ENCODE measurements at regions of chr14 and their contacts with region 1.

Region 1: GRCh38 chr14:52325126-52325525 is 11.0 kb downstream of the PTGER2 start:
- DNase-seq: peak; percentile 52
- H3K4me3 Mint-ChIP-seq: peak overlapping the region; percentile 77
- H3K27ac Mint-ChIP-seq: peak overlapping the region; percentile 62
- H3K4me1 Mint-ChIP-seq: peaks cover 90% of the 10 kb centered on the region
- H3K27me3 Mint-ChIP-seq: no peaks in the 10 kb centered on the region

Region 2: DNA sequence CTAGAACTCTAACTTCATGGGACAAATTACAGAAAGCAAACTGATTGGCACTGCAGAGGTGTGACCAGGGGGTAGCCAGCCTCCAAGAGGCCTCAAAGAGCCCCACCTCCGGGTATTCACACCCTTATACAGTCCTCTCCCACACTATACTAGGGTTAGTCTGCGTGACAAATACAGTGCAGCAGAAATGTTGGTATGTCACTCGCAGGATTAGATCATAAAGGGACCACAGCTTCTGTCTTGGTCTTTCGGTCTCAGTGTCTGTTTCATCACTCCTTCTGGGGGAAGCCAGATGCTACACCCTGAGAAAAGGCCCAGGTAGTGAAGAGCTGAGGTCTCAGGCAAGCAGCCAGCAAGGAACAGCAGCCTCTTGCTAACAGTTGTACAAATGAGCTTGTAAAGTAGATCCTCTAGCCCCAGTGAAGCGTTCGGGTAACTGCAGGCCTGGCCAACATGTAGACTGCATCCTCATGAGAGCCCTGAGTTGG is 1588.2 kb before region 1 on chr14:
- intact Hi-C with region 1: loop called (anchors 5 kb)
- DNase-seq: peak; percentile 18
- H3K4me3 Mint-ChIP-seq: no peak overlapping the region
- H3K27ac Mint-ChIP-seq: peak overlapping the region; percentile 87
- H3K4me1 Mint-ChIP-seq: peaks cover 45% of the 10 kb centered on the region
- H3K27me3 Mint-ChIP-seq: no peaks in the 10 kb centered on the region

Region 3: GRCh38 chr14:52338051-52338681 is 13.0 kb after region 1 on chr14:
- intact Hi-C with region 1: loop called (anchors 1 kb)
- DNase-seq: no peak
- H3K4me3 Mint-ChIP-seq: no peak overlapping the region
- H3K27ac Mint-ChIP-seq: no peak overlapping the region
- H3K4me1 Mint-ChIP-seq: peaks cover 36% of the 10 kb centered on the region
- H3K27me3 Mint-ChIP-seq: peaks cover 2% of the 10 kb centered on the region

Region 4: GRCh38 chr14:52402812-52403526 is 77.8 kb after region 1 on chr14:
- intact Hi-C with region 1: loop called (anchors 1 kb)
- DNase-seq: no peak
- H3K4me3 Mint-ChIP-seq: no peak overlapping the region
- H3K27ac Mint-ChIP-seq: peak overlapping the region; percentile 54
- H3K4me1 Mint-ChIP-seq: peaks cover 73% of the 10 kb centered on the region
- H3K27me3 Mint-ChIP-seq: no peaks in the 10 kb centered on the region

Region 5: DNA sequence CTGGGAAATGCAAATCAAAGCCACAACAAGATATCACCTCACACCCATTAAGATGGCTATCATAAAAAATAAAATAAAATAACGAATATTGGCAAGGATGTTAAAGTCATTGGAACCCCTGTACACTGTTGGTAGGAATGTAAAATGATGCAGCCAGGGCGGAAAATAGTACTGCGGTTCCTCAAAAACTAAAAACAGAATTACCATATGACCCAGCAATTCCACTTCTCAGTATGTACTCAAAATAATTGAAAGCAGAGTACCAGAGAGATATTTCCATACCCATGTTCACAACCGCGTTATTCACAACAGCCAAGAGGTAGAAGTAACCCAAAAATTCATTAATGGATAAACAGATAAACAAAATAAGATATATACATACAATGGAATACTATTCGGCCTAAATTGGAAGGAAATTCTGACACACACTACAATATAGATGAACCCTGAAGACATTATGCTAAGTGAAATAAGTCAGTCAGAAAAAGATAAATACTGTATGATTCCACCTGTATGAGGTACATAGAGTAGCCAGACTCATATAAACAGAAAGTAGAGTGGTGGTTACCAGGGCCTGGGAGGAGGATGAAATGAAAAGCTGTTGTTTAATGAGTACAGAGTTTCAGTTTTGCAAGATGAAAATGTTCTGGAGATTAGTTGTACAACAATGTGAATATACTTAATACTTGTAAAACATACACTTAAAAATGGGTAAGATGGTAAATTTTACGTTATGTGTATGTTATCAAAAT is 142.6 kb after region 1 on chr14:
- intact Hi-C with region 1: loop called (anchors 1 kb)
- DNase-seq: no peak
- H3K4me3 Mint-ChIP-seq: no peak overlapping the region
- H3K27ac Mint-ChIP-seq: peak overlapping the region; percentile 75
- H3K4me1 Mint-ChIP-seq: peaks cover 24% of the 10 kb centered on the region
- H3K27me3 Mint-ChIP-seq: no peaks in the 10 kb centered on the region